Activated B cell treated with CpG ODN at 0.5 μM for 24 hours (primary cell): ENCODE measurements at regions of chr14 and their contacts with region 1.

Region 1: GRCh38 chr14:69204753-69205152 is 13.5 kb downstream of the EXD2 start:
- DNase-seq: no peak
- ATAC-seq: no peak
- H3K4me3 Mint-ChIP-seq: no peak overlapping the region
- H3K27ac Mint-ChIP-seq: no peak overlapping the region
- H3K4me1 Mint-ChIP-seq: no peaks in the 10 kb centered on the region
- H3K27me3 Mint-ChIP-seq: no peaks in the 10 kb centered on the region
- CTCF ChIP-seq: no peak

Region 2: DNA sequence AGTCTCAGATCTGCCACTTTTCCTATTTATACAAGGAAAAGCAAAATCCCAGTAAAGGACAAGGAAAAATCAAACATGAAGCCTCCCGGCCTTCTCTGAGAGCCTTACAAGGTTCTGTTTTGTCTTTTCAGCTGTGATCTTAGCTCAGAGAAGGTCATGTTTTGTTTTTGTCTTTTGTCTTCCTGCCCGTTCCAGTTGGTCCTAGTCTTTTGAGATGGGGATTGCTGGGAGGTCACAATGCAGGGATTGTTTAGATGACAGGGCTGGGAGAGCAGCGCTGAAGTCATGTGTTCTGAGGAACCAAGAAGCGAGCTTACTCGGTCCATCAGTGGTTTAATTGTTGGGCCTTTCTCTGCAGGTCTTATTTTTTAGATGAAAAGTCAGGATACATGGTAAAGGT is 1665.6 kb before region 1 on chr14:
- CTCF ChIA-PET with region 1: no interaction called
- POLR2A ChIA-PET with region 1: interaction called, 16 read pairs
- intact Hi-C with region 1: no loop called
- DNase-seq: no peak
- ATAC-seq: no peak
- H3K4me3 Mint-ChIP-seq: no peak overlapping the region
- H3K27ac Mint-ChIP-seq: no peak overlapping the region
- H3K4me1 Mint-ChIP-seq: peaks cover 9% of the 10 kb centered on the region
- H3K27me3 Mint-ChIP-seq: peaks cover 36% of the 10 kb centered on the region
- CTCF ChIP-seq: no peak

Region 3: GRCh38 chr14:69281450-69282169 is 76.9 kb after region 1 on chr14:
- CTCF ChIA-PET with region 1: no interaction called
- POLR2A ChIA-PET with region 1: no interaction called
- intact Hi-C with region 1: no loop called
- DNase-seq: no peak
- ATAC-seq: no peak
- H3K4me3 Mint-ChIP-seq: no peak overlapping the region
- H3K27ac Mint-ChIP-seq: no peak overlapping the region
- H3K4me1 Mint-ChIP-seq: no peaks in the 10 kb centered on the region
- H3K27me3 Mint-ChIP-seq: peaks cover 20% of the 10 kb centered on the region
- CTCF ChIP-seq: no peak

Region 4: DNA sequence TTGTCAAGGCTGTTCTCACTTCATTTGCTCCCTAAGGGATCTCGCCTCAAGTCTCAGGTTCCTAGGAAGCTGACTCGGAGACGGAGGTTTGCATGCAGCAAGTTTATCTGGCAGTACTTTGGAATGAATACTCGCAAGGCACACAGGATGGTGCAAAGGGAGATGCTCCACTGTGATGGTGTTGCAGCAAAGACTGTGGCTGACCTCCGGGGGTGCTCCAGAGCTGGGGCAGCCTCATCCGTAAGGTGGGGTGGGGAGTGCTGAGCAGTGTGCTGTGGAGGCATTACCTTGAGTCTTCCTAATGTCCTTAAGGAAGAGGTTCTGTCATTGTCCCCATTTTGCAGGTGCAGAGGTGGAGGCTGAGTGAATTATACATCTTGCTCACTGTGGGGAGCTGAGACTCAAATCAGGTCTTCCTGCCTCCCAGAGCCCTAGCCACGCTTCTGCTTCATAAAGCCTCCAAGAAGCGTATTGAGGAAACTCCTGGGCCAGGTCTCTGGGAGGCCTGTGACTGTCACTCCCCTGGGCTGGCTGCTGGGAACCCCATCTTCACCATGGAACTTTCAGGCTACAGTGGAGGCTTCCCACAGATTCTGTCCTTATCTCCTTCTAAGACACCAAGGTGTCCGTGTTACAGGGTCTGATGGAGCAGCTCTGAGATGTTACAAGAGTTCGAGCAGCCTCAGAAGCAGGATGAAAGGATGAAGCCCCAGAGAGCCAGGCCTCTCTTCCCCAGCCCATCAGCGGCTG is 94.7 kb after region 1 on chr14:
- CTCF ChIA-PET with region 1: no interaction called
- POLR2A ChIA-PET with region 1: no interaction called
- intact Hi-C with region 1: no loop called
- DNase-seq: no peak
- ATAC-seq: no peak
- H3K4me3 Mint-ChIP-seq: no peak overlapping the region
- H3K27ac Mint-ChIP-seq: no peak overlapping the region
- H3K4me1 Mint-ChIP-seq: no peaks in the 10 kb centered on the region
- H3K27me3 Mint-ChIP-seq: peaks cover 10% of the 10 kb centered on the region
- CTCF ChIP-seq: no peak